ENCODE measurements at regions of chr9 and their contacts with region 1.

Region 1: DNA sequence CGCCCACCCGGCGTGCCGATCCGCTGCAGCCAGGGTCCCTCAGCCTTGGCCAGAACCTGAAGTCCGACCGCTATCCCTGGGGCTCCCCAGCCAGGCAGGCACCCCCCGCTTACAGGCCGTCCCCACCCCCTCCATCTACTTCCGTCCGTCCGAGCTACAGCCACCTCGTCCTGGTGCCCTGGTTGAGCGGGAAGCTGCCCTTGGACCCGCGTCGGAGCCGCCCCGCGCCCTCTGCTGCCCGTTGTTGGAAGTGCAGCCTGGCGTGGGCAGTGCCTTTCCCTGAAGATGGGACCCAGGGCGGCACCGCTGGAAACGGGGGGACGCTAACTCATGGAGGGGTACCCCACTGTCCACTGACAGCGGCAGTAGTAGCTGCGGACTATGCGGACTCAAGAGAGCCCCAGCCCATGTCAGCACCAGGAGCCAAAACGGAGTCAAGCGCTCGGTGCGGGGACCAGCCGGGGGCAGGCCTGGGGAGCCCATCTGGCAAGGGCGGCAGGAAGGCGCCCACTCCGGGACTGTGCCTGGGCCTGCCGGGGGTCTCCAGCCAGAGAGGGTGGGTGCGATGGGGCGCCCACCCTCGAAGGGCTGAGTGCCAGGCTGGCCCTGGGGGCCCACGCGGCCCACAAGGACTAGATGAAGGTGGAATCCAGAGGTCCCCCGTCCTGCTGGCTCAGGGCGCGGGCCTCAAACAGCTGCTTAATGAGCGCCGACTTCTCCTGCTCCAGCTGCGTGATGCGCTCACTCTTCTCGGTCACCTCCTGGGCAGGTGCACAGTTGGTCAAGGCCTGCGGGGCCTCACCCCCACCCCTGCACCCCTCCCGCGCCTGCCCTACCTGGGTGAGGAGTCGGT is 6.1 kb downstream of the SAPCD2 start:
- DNase-seq: peak in 9 of 10 donors; percentile 44 to 95 (median 76)

Region 2: DNA sequence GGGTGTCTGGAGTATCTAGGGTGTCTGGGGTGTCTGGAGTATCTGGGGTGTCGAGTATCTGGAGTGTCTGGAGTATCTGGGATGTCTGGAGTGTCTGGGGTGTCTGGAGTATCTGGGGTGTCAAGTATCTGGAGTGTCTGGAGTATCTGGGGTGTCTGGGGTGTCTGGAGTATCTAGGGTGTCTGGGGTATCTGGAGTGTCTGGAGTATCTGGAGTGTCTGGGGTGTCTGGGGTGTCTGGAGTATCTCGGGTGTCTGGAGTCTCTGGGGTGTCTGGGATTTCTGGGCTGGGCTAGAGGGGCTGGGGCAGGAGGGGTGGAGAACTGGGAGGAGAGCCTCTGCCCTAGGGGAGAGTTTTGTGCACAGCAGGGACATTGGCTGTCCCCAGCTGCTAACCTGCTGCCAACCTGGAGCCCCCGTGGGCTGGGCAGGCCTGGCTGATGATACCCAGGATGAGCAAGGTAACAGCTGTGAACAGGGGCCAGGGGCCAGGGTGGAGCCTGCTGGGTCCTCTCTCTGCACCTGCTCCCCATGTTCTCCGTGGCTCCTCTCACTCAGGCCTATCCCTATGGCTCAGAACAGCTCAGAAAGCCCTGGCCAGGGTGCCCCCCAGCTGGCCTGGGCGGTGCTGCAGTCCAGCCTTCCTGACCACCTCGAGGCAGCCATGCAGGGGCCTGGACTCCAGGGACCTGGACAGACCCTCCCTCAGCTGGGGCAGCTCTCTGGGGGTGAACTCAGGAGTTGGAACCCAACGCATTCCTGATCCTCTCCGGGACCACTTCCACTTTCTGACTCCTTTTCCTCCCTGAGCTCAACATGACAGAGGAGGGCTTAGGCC is 889.3 kb before region 1 on chr9:
- intact Hi-C with region 1: no loop called
- DNase-seq: no peak

Region 3: DNA sequence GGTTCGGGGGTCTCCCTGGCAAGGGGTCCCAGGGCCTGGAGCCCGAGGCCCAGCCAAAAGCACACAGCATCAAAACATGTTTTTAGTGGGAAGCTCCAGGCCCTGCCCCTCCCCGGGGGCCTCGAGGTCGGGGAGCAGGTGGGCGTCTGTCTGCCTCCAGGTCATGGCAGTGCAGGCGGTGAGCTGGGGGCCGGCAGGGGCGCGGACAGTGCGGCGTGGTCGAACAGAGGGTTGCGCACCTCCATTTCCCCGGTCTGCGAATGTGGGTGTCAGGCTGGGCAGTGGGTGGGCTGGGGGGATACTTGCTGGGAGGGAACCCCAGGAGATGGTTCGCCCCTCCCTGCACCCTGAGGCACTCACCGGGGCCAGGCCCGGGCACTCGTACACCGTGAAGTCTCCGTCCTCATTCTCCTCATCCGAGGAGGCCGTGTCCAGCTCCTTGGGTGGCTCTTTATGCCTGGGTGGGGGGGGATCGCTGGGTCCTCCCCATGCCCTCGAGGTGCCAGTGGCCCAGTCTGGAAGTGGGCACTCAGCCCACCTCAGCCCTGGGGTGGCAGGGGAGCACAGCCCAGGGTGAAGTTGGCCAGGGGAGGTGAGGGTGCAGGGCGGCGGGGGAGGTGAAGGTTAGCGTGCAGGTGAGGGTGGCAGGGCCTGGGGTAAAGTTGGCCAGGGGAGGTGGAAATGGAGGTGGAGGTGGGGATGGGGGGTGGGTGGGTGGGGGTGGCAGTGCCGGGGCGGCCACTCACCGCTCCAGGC is 24.5 kb before region 1 on chr9:
- intact Hi-C with region 1: no loop called
- DNase-seq: no peak

Region 4: GRCh38 chr9:137049544-137050449 is 14.5 kb before region 1 on chr9:
- intact Hi-C with region 1: loop called (anchors 2 kb)
- DNase-seq: peak in 7 of 10 donors; percentile 70 to 95 (median 75)

Region 5: DNA sequence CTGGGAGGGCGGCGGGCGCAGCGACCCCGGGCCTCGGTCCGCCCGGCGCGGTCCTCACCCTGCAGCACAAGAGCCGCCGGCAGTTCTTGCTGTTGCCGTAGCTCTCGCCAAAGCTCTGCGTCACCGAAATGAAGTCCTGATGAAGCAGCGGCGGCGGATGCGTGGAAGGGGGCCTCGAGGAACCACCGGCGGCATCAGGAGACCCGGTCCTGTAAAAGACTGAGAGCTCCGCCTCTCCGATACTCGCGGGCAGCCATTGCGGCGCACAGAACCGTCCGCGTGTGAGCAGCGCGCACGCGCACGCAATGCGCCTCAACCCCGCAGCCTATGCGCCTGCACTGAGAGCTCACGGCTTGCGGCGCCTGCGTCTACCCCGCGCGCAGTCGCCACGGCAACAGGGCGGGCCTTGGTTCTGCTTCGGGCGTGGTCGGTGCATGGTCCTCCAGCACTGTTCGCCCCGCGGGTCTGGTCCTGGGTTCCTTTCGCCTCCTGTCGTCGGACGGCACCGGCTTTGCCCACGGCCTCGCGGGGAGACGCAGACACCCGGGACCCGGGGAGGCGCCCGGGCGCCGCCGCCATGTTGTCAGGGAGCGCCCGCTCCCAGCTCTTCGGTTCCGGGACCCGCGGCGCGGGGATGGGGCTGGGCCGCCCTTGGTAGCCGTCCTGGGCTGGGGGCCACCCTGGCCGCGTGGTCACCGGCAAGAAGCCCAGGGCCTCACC is 65.4 kb after region 1 on chr9:
- intact Hi-C with region 1: no loop called
- DNase-seq: peak; percentile 72 to 98 (median 88)

Region 6: DNA sequence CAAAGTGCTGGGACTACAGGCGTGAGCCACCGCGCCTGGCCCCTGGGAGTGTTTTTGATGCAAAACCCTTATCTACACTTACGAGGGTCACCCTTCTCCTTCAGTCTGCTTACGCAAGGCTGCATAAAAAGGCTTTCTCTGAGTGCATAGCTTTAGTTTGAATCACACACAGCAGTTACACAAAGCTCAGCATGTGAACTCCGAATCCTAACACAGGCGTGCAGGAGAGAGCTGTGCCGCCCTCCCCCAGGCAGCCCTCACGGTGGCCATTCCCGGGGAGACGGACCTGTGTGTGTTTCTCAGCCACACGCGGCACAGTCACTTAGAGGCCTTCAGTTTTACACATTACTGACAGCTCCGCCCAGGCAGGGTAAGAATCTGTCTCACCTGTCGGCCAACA is 332.0 kb after region 1 on chr9:
- intact Hi-C with region 1: no loop called
- DNase-seq: no peak

Measured in posterior cingulate gyrus (tissue), 11 donors.